CD4-positive, alpha-beta memory T cell (primary cell): ENCODE measurements at regions of chrX and their contacts with region 1.

Region 1: DNA sequence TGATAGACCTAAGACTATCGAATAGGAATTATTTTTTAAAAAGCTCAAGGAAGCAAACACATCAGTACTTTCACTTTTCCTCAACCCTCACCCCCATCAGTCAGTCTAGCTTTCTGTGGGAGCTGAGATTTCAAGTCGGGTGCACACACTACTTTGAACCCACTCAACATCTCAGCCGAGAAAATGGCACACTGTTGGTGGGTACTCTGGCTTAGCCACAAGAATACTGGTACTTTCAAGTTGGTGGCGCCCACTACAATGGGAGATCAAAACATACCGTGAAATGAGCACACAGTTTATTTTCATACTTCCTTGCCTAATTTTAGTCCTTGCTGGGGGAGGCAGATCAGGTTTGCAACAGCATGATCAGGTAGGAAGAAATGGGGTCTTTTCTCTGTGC is 10.2 kb downstream of the CD40LG start:
- DNase-seq: peak in 1 of 5 donors; percentile 41
- H3K4me3 ChIP-seq: peak overlapping the region in 1 of 2 donors; percentile 23
- H3K4me3 Mint-ChIP-seq: peak overlapping the region; percentile 81 to 99 (median 97)
- H3K27ac ChIP-seq: peak overlapping the region; percentile 60
- H3K27ac Mint-ChIP-seq: peak overlapping the region; percentile 84 to 94 (median 92)
- H3K4me1 ChIP-seq: peaks cover 99% of the 10 kb centered on the region
- H3K4me1 Mint-ChIP-seq: peaks cover 57 to 99% (median 70%) of the 10 kb centered on the region in 4 donors
- H3K27me3 ChIP-seq: no peaks in the 10 kb centered on the region
- H3K27me3 Mint-ChIP-seq: no peaks in the 10 kb centered on the region

Region 2: DNA sequence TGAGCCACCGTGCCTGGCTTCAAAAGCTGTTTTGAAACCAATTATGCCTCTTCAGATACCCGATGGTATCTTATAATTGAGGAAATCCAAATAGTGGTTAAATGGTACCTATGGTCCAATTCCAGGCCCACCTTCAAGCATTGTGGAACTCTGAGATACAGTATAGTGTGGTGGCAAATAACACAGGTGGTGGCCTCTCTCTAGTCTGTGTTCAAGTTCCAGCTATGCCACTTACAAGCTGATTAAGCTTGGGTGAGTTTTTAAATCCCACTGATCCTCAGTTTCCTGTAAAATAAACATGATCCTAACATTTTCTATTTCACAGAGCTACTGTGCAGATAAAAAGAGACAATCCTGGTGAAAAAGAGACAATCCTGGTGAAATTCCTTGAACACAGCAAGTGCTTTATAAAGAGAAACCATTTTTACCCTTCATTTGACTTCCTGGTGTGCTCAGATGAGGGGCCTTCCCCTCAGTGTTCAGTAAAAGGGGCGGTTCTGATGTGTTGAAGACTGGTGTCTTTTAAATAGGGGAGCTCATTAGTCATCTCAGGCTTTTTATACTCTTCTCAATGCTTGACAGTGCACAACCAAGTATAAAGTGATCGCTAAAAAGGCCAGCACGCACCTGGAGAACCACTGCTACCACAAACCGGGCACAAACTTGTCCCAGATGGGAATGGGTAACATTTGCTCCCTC is 41.0 kb before region 1 on chrX:
- CTCF ChIA-PET with region 1: interaction called, 8 read pairs
- POLR2A ChIA-PET with region 1: interaction called, 148 read pairs
- intact Hi-C with region 1: no loop called
- DNase-seq: peak in 4 of 5 donors; percentile 42 to 69 (median 48)
- H3K4me3 ChIP-seq: peak overlapping the region in 1 of 2 donors; percentile 18
- H3K4me3 Mint-ChIP-seq: peak overlapping the region; percentile 27 to 81 (median 68)
- H3K27ac ChIP-seq: peak overlapping the region; percentile 57
- H3K27ac Mint-ChIP-seq: peak overlapping the region; percentile 79 to 93 (median 87)
- H3K4me1 ChIP-seq: peaks cover 67% of the 10 kb centered on the region
- H3K4me1 Mint-ChIP-seq: peaks cover 36 to 70% (median 46%) of the 10 kb centered on the region in 4 donors
- H3K27me3 ChIP-seq: no peaks in the 10 kb centered on the region
- H3K27me3 Mint-ChIP-seq: no peaks in the 10 kb centered on the region

Region 3: GRCh38 chrX:136626237-136626636 is 31.9 kb before region 1 on chrX:
- CTCF ChIA-PET with region 1: no interaction called
- POLR2A ChIA-PET with region 1: interaction called, 148 read pairs
- intact Hi-C with region 1: no loop called
- DNase-seq: no peak
- H3K4me3 ChIP-seq: no peak overlapping the region
- H3K4me3 Mint-ChIP-seq: peak overlapping the region in 7 of 8 donors; percentile 15 to 82 (median 24)
- H3K27ac ChIP-seq: no peak overlapping the region
- H3K27ac Mint-ChIP-seq: peak overlapping the region in 6 of 7 donors; percentile 32 to 94 (median 76)
- H3K4me1 ChIP-seq: peaks cover 90% of the 10 kb centered on the region
- H3K4me1 Mint-ChIP-seq: peaks cover 59 to 91% (median 77%) of the 10 kb centered on the region in 4 donors
- H3K27me3 ChIP-seq: no peaks in the 10 kb centered on the region
- H3K27me3 Mint-ChIP-seq: no peaks in the 10 kb centered on the region

Region 4: DNA sequence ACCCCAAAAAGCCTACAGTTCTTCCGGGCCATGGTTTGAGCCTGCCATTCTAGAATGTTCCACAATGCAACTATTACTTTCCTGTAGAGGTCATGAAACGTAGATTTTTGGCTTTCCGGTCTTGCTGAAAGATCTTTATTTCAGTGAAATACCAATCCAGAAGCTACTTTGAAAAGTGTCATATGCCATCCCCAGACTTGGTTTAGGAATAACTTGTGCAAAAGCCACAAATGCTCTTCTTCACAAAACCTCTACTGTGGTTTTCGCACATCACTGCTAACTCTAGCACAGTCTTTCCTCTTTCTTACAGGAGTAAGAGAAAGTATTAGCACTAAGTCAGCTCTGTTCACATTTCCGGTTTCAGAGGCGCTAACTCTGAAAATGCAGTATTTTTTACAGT is 22.9 kb before region 1 on chrX:
- CTCF ChIA-PET with region 1: interaction called, 5 read pairs
- POLR2A ChIA-PET with region 1: interaction called, 137 read pairs
- intact Hi-C with region 1: loop called (anchors 1 kb)
- DNase-seq: peak; percentile 56 to 68 (median 62)
- H3K4me3 ChIP-seq: peak overlapping the region in 1 of 2 donors; percentile 47
- H3K4me3 Mint-ChIP-seq: peak overlapping the region; percentile 51 to 88 (median 82)
- H3K27ac ChIP-seq: peak overlapping the region; percentile 56
- H3K27ac Mint-ChIP-seq: peak overlapping the region; percentile 78 to 96 (median 94)
- H3K4me1 ChIP-seq: peaks cover 97% of the 10 kb centered on the region
- H3K4me1 Mint-ChIP-seq: peaks cover 52 to 94% (median 73%) of the 10 kb centered on the region in 4 donors
- H3K27me3 ChIP-seq: no peaks in the 10 kb centered on the region
- H3K27me3 Mint-ChIP-seq: no peaks in the 10 kb centered on the region

Region 5: DNA sequence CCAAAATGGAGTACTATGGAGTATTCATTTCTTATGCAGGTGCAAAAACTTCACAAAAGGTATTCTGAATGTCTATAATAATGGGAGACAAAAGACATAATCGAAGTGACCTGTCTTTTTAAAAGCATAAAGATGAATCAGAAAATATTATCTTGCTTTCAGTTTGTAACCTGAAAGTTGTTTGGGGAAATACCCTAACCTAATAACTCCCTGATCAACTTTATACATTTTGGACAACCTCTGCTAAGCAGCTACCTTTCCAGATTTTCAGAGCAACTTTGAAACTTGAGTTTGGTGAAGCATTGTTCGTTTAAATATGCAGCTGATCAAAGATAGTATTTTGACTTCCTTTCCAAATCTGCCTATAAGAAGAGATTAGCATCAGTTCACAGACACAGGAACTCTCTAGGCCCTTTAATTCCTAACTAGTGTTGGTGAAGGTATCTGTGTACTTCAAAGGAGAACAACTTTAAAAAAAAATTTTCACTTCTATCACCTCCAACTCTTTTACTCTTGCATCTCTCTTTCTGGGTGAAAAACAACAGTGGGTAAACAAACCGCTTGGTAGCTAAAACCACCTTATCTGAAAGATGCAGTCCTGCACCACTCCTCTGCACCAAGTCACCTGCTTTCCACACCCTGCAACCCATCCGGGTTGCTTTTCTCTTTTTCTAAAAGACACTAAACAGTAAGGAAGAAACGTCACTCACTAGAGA is 16.3 kb after region 1 on chrX:
- CTCF ChIA-PET with region 1: interaction called, 5 read pairs
- POLR2A ChIA-PET with region 1: interaction called, 163 read pairs
- intact Hi-C with region 1: loop called (anchors 2 kb)
- DNase-seq: peak; percentile 64 to 79 (median 75)
- H3K4me3 ChIP-seq: peak overlapping the region in 1 of 2 donors; percentile 12
- H3K4me3 Mint-ChIP-seq: peak overlapping the region; percentile 37 to 91 (median 78)
- H3K27ac ChIP-seq: peak overlapping the region; percentile 58
- H3K27ac Mint-ChIP-seq: peak overlapping the region; percentile 89 to 99 (median 94)
- H3K4me1 ChIP-seq: peaks cover 98% of the 10 kb centered on the region
- H3K4me1 Mint-ChIP-seq: peaks cover 68 to 100% (median 79%) of the 10 kb centered on the region in 4 donors
- H3K27me3 ChIP-seq: no peaks in the 10 kb centered on the region
- H3K27me3 Mint-ChIP-seq: no peaks in the 10 kb centered on the region